B cell (primary cell): ENCODE measurements at regions of chr6 and their contacts with region 1.

Region 1: DNA sequence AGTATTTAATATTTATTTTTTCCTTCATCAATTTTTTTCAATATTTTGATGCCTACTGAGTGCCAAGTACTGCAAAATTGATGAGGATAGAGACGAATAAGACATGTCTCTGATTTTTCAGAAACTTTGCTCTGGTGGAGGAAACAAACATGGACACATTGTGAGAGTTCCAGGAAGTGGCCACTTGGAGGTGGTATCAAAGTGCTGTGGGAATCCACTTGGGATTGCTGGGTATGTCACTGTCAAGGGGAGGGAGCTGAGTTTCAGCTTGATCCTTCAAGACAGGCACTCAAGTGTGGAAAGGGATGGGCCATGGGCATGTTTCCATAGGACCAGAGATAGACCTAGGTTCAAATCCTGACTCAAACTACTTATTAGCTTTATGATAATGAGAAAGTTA is 24.5 kb upstream of the ABCC10 start:
- DNase-seq: no peak
- ATAC-seq: no peak
- H3K4me3 ChIP-seq: no peak overlapping the region
- H3K4me3 Mint-ChIP-seq: no peak overlapping the region
- H3K27ac ChIP-seq: no peak overlapping the region
- H3K27ac Mint-ChIP-seq: peak overlapping the region; percentile 23
- H3K4me1 ChIP-seq: peaks cover 2% of the 10 kb centered on the region in 2 donors
- H3K4me1 Mint-ChIP-seq: peaks cover 3% of the 10 kb centered on the region
- H3K27me3 ChIP-seq: peaks cover 0 to 5% (median 2%) of the 10 kb centered on the region in 4 experiments
- H3K27me3 Mint-ChIP-seq: peaks cover 32% of the 10 kb centered on the region
- CTCF ChIP-seq: no peak

Region 2: DNA sequence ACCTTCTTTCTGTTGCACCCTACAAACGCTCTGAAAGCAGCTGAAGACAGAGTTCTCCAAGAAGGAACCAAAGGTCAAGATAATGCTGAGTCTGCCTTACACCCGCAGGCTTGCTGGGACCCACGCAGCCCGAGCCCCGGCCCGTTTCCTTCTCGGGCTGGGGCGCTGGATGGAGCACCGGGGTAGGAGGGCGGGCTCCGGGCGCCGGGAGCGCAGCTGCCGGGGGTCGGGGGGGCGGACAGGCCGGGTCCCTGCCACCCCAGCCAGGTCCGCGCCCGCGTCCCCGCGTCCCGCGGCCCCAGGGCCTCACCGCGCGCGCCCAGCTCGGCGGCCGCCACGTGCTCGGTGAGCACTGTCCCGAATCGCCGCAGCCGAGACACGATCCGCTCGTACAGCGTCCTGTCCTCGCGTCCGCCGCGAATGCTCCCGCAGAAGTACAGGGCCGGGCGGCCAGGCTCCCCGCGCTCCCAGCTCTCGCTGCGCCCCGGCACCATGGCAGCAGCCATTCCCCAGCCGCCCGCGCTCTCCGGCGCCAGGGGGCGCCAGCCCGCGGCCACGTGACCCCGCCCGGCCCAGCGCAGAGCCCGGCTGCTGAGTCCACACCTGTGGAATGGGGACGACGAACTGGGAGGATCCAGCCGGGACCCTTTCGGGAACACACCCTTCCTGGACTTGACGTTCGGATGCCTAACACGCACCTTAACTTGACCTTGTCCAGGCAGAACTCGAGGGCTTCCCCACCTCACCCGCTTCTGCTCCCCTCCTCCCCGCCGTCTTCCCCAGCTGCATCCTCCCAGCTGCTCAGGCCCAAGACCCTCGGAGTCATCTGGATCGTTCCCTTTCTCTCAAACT is 173.6 kb before region 1 on chr6 and contains the start of gene DNPH1:
- CTCF ChIA-PET with region 1: interaction called, 22 read pairs
- POLR2A ChIA-PET with region 1: no interaction called
- intact Hi-C with region 1: no loop called
- DNase-seq: peak; percentile 89
- ATAC-seq: peak; percentile 67
- H3K4me3 ChIP-seq: peak within 1 kb of the TSS; percentile 43 to 70 (median 61)
- H3K4me3 Mint-ChIP-seq: peak within 1 kb of the TSS; percentile 92
- H3K27ac ChIP-seq: peak within 1 kb of the TSS in 1 of 2 donors; percentile 73
- H3K27ac Mint-ChIP-seq: peak within 1 kb of the TSS; percentile 90
- H3K4me1 ChIP-seq: peaks cover 34 to 45% of the 10 kb centered on the region in 2 donors
- H3K4me1 Mint-ChIP-seq: peaks cover 29% of the 10 kb centered on the region
- H3K27me3 ChIP-seq: peaks cover 0 to 5% (median 0%) of the 10 kb centered on the region in 4 experiments
- H3K27me3 Mint-ChIP-seq: peaks cover 9% of the 10 kb centered on the region
- CTCF ChIP-seq: peak; percentile 95
- total RNA-seq, gene DNPH1: 25.8 and 29.0 TPM in 2 replicates

Region 3: GRCh38 chr6:43263314-43264178 is 139.3 kb before region 1 on chr6:
- CTCF ChIA-PET with region 1: interaction called, 73 read pairs
- POLR2A ChIA-PET with region 1: no interaction called
- intact Hi-C with region 1: loop called (anchors 1 kb)
- DNase-seq: peak; percentile 84
- ATAC-seq: peak; percentile 98
- H3K4me3 ChIP-seq: no peak overlapping the region
- H3K4me3 Mint-ChIP-seq: no peak overlapping the region
- H3K27ac ChIP-seq: no peak overlapping the region
- H3K27ac Mint-ChIP-seq: no peak overlapping the region
- H3K4me1 ChIP-seq: no peaks in the 10 kb centered on the region
- H3K4me1 Mint-ChIP-seq: peaks cover 8% of the 10 kb centered on the region
- H3K27me3 ChIP-seq: peaks cover 0 to under 1% (median 0%) of the 10 kb centered on the region in 4 experiments
- H3K27me3 Mint-ChIP-seq: peaks cover 4% of the 10 kb centered on the region
- CTCF ChIP-seq: peak; percentile 84

Region 4: GRCh38 chr6:43369174-43370022 is 33.4 kb before region 1 on chr6 and contains the start of gene ZNF318:
- CTCF ChIA-PET with region 1: interaction called, 27 read pairs
- POLR2A ChIA-PET with region 1: interaction called, 3 read pairs
- intact Hi-C with region 1: loop called (anchors 2 kb)
- DNase-seq: peak; percentile 98
- ATAC-seq: peak; percentile 90
- H3K4me3 ChIP-seq: peak within 1 kb of the TSS; percentile 83 to 95 (median 88)
- H3K4me3 Mint-ChIP-seq: peak within 1 kb of the TSS; percentile 98
- H3K27ac ChIP-seq: peak within 1 kb of the TSS; percentile 92 to 94
- H3K27ac Mint-ChIP-seq: peak within 1 kb of the TSS; percentile 97
- H3K4me1 ChIP-seq: peaks cover 64 to 69% of the 10 kb centered on the region in 2 donors
- H3K4me1 Mint-ChIP-seq: peaks cover 72% of the 10 kb centered on the region
- H3K27me3 ChIP-seq: no peaks in the 10 kb centered on the region
- H3K27me3 Mint-ChIP-seq: no peaks in the 10 kb centered on the region
- CTCF ChIP-seq: no peak
- total RNA-seq, gene ZNF318: 79.7 and 80.9 TPM in 2 replicates

Region 5: GRCh38 chr6:43383021-43383667 is 19.7 kb before region 1 on chr6:
- CTCF ChIA-PET with region 1: interaction called, 34 read pairs
- POLR2A ChIA-PET with region 1: no interaction called
- intact Hi-C with region 1: no loop called
- DNase-seq: no peak
- ATAC-seq: no peak
- H3K4me3 ChIP-seq: peak overlapping the region in 2 of 5 experiments; percentile 18 to 42
- H3K4me3 Mint-ChIP-seq: peak overlapping the region; percentile 85
- H3K27ac ChIP-seq: peak overlapping the region; percentile 91 to 94
- H3K27ac Mint-ChIP-seq: peak overlapping the region; percentile 98
- H3K4me1 ChIP-seq: peaks cover 68 to 73% of the 10 kb centered on the region in 2 donors
- H3K4me1 Mint-ChIP-seq: peaks cover 67% of the 10 kb centered on the region
- H3K27me3 ChIP-seq: peaks cover 0 to 4% (median 2%) of the 10 kb centered on the region in 4 experiments
- H3K27me3 Mint-ChIP-seq: peaks cover 12% of the 10 kb centered on the region
- CTCF ChIP-seq: no peak